Posterior cingulate gyrus (tissue), 11 donors: ENCODE measurements at regions of chr1 and their contacts with region 1.

Region 1: DNA sequence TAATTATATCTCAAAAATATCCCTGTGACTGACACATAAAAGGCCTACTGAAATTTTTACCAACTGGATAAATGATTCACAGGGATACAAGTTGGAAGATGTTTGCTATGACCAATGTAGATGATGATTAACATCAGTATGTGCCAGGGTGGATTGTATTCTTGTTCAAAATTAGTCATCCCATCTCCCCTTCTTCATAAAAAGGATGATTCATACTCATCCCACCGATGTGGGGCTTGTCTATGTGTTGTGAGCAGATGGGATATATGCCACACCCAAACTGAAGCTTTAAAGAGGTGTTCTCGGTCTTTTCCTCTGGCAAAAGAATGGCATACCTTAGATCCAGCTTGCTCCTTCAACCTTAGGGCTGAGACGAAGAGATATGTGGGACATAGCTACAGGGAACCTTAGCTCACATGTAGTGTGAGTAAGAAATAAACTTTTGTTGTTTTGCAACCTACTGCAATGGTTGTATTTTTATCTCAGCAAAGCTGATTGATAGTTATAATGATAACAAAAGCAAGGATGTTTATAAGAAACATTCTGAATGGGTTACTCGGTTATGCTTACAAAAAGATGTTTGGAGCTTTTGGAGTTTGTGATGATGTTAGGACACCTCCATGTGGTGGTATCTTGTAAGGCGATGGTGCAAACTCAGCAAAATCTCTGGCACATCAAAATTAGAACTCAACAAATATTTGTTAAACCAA is 29.4 kb downstream of the SPATA17 start:
- DNase-seq: no peak

Region 2: DNA sequence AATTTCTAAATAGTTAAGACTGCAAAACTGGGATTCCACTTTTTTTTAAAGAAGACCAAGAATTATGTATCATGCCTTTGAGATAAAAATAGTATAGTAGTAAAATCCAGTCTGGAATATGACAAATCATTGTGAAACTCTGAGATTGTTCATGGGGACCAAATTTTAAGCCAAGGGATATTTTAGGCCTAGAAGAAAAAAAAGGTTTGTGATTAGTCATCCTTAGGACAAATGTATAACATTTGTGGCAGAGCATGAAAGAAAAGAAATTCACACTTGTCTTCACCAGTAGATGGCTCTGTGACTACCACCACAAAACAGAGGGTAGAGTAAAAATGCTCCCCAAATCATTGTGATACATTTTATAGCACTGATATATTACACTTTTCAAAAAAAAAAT is 1867.3 kb before region 1 on chr1:
- intact Hi-C with region 1: loop called (anchors 10 kb)
- DNase-seq: no peak

Region 3: GRCh38 chr1:217839161-217839560 is 178.7 kb after region 1 on chr1:
- intact Hi-C with region 1: no loop called
- DNase-seq: no peak